ENCODE measurements at regions of chr20 and their contacts with region 1.

Region 1: GRCh38 chr20:3045816-3046676 is at the start of gene MRPS26:
- DNase-seq: peak; percentile 89
- ATAC-seq: peak; percentile 90
- H3K4me3 ChIP-seq: peak within 1 kb of the TSS; percentile 3 to 89 (median 82)
- H3K4me3 Mint-ChIP-seq: peak within 1 kb of the TSS; percentile 95
- H3K27ac ChIP-seq: peak within 1 kb of the TSS; percentile 63 to 88
- H3K27ac Mint-ChIP-seq: peak within 1 kb of the TSS; percentile 97
- H3K4me1 ChIP-seq: peaks cover 11 to 17% of the 10 kb centered on the region in 2 donors
- H3K4me1 Mint-ChIP-seq: peaks cover 15% of the 10 kb centered on the region
- H3K27me3 ChIP-seq: no peaks in the 10 kb centered on the region
- H3K27me3 Mint-ChIP-seq: no peaks in the 10 kb centered on the region
- CTCF ChIP-seq: no peak
- total RNA-seq, gene MRPS26: 33.3 and 35.9 TPM in 2 replicates

Region 2: GRCh38 chr20:2873010-2873746 is 172.9 kb before region 1 on chr20 and contains the start of gene PTPRA:
- CTCF ChIA-PET with region 1: no interaction called
- POLR2A ChIA-PET with region 1: interaction called, 3 read pairs
- intact Hi-C with region 1: loop called (anchors 10 kb)
- DNase-seq: peak; percentile 92
- ATAC-seq: peak; percentile 94
- H3K4me3 ChIP-seq: peak within 1 kb of the TSS; percentile 77 to 85 (median 79)
- H3K4me3 Mint-ChIP-seq: peak within 1 kb of the TSS; percentile 92
- H3K27ac ChIP-seq: peak within 1 kb of the TSS; percentile 25 to 32
- H3K27ac Mint-ChIP-seq: peak within 1 kb of the TSS; percentile 84
- H3K4me1 ChIP-seq: peaks cover 27 to 31% of the 10 kb centered on the region in 2 donors
- H3K4me1 Mint-ChIP-seq: peaks cover 33% of the 10 kb centered on the region
- H3K27me3 ChIP-seq: peaks cover 0 to 11% (median 0%) of the 10 kb centered on the region in 4 experiments
- H3K27me3 Mint-ChIP-seq: peaks cover 8% of the 10 kb centered on the region
- CTCF ChIP-seq: no peak
- total RNA-seq, gene PTPRA: 64.2 and 70.0 TPM in 2 replicates

Region 3: GRCh38 chr20:3068986-3069900 is 23.2 kb after region 1 on chr20:
- CTCF ChIA-PET with region 1: no interaction called
- POLR2A ChIA-PET with region 1: interaction called, 5 read pairs
- intact Hi-C with region 1: loop called (anchors 1 kb)
- DNase-seq: peak; percentile 53
- ATAC-seq: peak; percentile 25
- H3K4me3 ChIP-seq: no peak overlapping the region
- H3K4me3 Mint-ChIP-seq: no peak overlapping the region
- H3K27ac ChIP-seq: no peak overlapping the region
- H3K27ac Mint-ChIP-seq: no peak overlapping the region
- H3K4me1 ChIP-seq: peaks cover 14 to 15% of the 10 kb centered on the region in 2 donors
- H3K4me1 Mint-ChIP-seq: peaks cover 31% of the 10 kb centered on the region
- H3K27me3 ChIP-seq: peaks cover 0 to 12% (median 2%) of the 10 kb centered on the region in 4 experiments
- H3K27me3 Mint-ChIP-seq: no peaks in the 10 kb centered on the region
- CTCF ChIP-seq: peak; percentile 23

Region 4: GRCh38 chr20:3156811-3157619 is 111.0 kb after region 1 on chr20:
- CTCF ChIA-PET with region 1: no interaction called
- POLR2A ChIA-PET with region 1: no interaction called
- intact Hi-C with region 1: loop called (anchors 1 kb)
- DNase-seq: peak; percentile 24
- ATAC-seq: peak; percentile 23
- H3K4me3 ChIP-seq: no peak overlapping the region
- H3K4me3 Mint-ChIP-seq: peak overlapping the region; percentile 67
- H3K27ac ChIP-seq: peak overlapping the region; percentile 1 to 48
- H3K27ac Mint-ChIP-seq: peak overlapping the region; percentile 74
- H3K4me1 ChIP-seq: peaks cover 34 to 38% of the 10 kb centered on the region in 2 donors
- H3K4me1 Mint-ChIP-seq: peaks cover 61% of the 10 kb centered on the region
- H3K27me3 ChIP-seq: no peaks in the 10 kb centered on the region
- H3K27me3 Mint-ChIP-seq: no peaks in the 10 kb centered on the region
- CTCF ChIP-seq: no peak

Region 5: DNA sequence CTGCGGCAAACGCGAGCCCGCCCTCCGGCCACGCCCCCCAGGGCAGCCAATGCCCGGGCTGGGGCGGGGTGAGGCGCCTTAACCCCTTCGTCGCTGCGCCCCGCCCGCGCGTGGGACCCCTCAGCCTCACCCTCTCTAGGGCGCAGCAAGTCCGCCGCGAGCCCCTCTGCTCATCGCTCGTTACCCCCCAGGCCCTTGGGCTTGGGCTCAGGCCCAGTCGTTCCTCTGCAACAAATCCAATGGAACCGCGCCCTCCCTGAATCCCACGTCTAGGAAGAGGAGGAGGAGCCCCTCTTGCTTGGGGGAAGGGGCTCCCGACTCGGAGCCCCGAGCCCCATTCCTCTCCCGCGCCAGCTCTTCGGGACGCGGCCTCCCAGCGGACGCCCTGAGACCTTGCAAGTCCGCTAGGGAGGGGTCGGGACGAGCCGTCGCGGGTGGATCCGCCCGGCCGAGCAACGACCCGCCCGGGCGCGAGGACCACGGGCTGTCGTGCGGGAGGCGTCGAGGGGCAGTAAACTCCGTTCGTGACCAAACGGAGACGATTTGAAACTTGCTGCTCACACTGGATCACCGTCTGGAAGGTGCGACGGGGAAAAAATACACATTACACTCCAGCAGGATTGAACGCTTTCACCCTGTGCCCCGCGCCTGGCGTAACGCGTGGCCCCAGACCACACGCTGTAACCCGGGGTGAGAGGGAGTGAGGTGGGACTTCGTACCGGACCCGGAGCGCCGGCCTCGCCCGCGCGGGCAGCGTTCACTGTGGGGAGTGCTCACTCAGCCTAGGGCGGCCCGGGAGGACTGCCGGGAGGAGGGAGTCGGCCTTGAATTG is 127.8 kb after region 1 on chr20:
- CTCF ChIA-PET with region 1: no interaction called
- POLR2A ChIA-PET with region 1: no interaction called
- intact Hi-C with region 1: loop called (anchors 1 kb)
- DNase-seq: no peak
- ATAC-seq: peak; percentile 90
- H3K4me3 ChIP-seq: peak overlapping the region; percentile 34 to 94 (median 79)
- H3K4me3 Mint-ChIP-seq: peak overlapping the region; percentile 87
- H3K27ac ChIP-seq: no peak overlapping the region
- H3K27ac Mint-ChIP-seq: peak overlapping the region; percentile 73
- H3K4me1 ChIP-seq: peaks cover 18 to 19% of the 10 kb centered on the region in 2 donors
- H3K4me1 Mint-ChIP-seq: peaks cover 17% of the 10 kb centered on the region
- H3K27me3 ChIP-seq: peaks cover 0 to 39% (median 25%) of the 10 kb centered on the region in 4 experiments
- H3K27me3 Mint-ChIP-seq: peaks cover 43% of the 10 kb centered on the region
- CTCF ChIP-seq: peak; percentile 30

Region 6: GRCh38 chr20:3204124-3204822 is 158.2 kb after region 1 on chr20 and contains the start of gene DDRGK1:
- CTCF ChIA-PET with region 1: no interaction called
- POLR2A ChIA-PET with region 1: no interaction called
- intact Hi-C with region 1: loop called (anchors 2 kb)
- DNase-seq: peak; percentile 96
- ATAC-seq: peak; percentile 93
- H3K4me3 ChIP-seq: peak within 1 kb of the TSS; percentile 73 to 89 (median 84)
- H3K4me3 Mint-ChIP-seq: peak within 1 kb of the TSS; percentile 97
- H3K27ac ChIP-seq: peak within 1 kb of the TSS; percentile 80
- H3K27ac Mint-ChIP-seq: peak within 1 kb of the TSS; percentile 96
- H3K4me1 ChIP-seq: peaks cover 15% of the 10 kb centered on the region in 2 donors
- H3K4me1 Mint-ChIP-seq: peaks cover 20% of the 10 kb centered on the region
- H3K27me3 ChIP-seq: no peaks in the 10 kb centered on the region
- H3K27me3 Mint-ChIP-seq: no peaks in the 10 kb centered on the region
- CTCF ChIP-seq: no peak
- total RNA-seq, gene DDRGK1: 51.9 and 55.5 TPM in 2 replicates

Region 7: DNA sequence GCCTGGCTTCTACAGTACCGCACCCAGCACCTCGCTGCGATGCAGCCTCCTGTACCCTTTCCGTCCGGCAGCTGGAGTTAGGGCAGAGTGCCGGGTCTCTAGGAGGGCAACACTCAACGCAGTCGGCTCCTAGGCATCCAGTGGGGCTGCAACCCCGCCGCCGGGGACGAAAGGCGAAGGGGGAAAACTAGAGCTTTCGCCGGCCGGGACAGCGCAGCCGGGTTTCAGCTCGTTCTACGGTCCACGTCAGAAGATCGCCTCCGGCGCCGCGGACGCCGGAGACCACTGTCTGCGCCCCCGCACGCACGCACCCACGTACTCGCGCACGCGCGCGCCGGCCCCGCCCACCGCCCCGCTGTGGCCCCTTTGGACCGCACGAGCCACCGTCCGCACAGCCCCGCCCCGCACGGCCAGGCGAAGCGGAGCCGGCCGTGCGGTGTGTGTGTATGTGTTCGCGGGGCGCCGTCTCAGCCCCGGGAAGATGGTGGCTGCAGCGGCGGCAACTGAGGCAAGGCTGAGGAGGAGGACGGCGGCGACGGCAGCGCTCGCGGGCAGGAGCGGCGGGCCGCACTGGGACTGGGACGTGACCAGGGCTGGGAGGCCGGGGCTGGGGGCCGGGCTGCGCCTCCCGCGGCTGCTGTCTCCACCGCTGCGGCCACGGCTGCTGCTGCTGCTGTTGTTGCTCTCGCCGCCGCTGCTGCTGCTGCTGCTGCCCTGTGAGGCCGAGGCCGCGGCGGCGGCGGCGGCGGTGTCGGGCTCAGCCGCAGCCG is 424.8 kb after region 1 on chr20 and contains the start of gene ATRN:
- CTCF ChIA-PET with region 1: no interaction called
- POLR2A ChIA-PET with region 1: no interaction called
- intact Hi-C with region 1: loop called (anchors 10 kb)
- DNase-seq: peak; percentile 94
- ATAC-seq: peak; percentile 92
- H3K4me3 ChIP-seq: peak within 1 kb of the TSS; percentile 49 to 88 (median 72)
- H3K4me3 Mint-ChIP-seq: peak within 1 kb of the TSS; percentile 90
- H3K27ac ChIP-seq: peak within 1 kb of the TSS; percentile 46 to 72
- H3K27ac Mint-ChIP-seq: peak within 1 kb of the TSS; percentile 88
- H3K4me1 ChIP-seq: peaks cover 25 to 35% of the 10 kb centered on the region in 2 donors
- H3K4me1 Mint-ChIP-seq: peaks cover 36% of the 10 kb centered on the region
- H3K27me3 ChIP-seq: peaks cover 0 to 2% (median under 1%) of the 10 kb centered on the region in 4 experiments
- H3K27me3 Mint-ChIP-seq: peaks cover 6% of the 10 kb centered on the region
- CTCF ChIP-seq: no peak
- total RNA-seq, gene ATRN: 18.3 and 19.5 TPM in 2 replicates

Measured in B cell (primary cell).